Ovary (tissue), 10 donors: ENCODE measurements at regions of chr11 and their contacts with region 1.

Region 1: GRCh38 chr11:33829433-33830141 is 55.3 kb upstream of the FBXO3 start:
- DNase-seq: peak; percentile 35 to 66 (median 56)
- H3K4me3 ChIP-seq: peak overlapping the region; percentile 33
- H3K27ac ChIP-seq: no peak overlapping the region
- H3K4me1 ChIP-seq: peaks cover 2% of the 10 kb centered on the region
- H3K27me3 ChIP-seq: no peaks in the 10 kb centered on the region
- CTCF ChIP-seq: peak; percentile 24 to 53 (median 47)
- EP300 ChIP-seq: no peak
- POLR2A ChIP-seq: no peak

Region 2: DNA sequence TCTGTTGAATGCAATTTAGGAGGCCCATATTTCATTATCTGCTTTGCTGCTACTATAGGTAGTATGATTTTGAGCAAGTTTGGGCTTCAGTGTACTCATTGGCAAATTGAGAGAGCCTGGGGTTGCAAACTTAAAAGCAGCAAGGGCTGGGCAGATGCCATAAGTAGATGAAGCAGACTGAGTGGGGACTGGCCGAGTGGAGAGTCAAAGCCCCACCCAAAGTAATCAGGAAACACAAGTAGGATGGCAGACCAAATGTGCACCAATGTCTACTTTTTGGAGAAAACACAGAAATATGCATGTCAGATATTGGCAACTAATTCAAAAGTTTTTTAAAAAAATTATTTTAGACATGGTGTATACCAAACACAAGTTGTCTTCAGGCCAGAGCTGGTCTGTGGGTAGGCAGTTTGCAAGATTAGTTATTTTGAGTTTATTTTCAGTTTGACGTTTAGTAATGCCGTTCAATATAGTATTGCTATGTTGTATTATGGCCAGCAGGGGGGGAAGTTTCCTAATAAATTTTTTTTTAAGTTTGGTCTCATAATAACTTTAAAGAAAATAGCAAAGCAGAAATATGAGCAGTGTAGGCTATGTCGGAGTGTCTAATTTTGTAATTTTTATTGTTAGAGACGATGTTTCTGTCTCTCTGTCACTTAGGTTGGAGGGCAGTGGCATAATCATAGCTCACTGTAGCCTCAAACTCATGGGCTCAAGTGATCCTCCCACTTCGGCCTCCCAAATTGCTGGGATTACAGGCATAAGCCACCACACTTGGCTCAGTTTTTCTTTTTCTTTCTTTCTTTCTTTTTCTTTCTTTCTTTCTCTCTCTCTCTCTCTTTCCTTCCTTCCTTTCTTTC is 467.3 kb before region 1 on chr11:
- intact Hi-C with region 1: loop called in 1 of 4 experiments (anchors 10 kb)
- DNase-seq: no peak
- H3K4me3 ChIP-seq: no peak overlapping the region
- H3K27ac ChIP-seq: no peak overlapping the region
- H3K4me1 ChIP-seq: no peaks in the 10 kb centered on the region
- H3K27me3 ChIP-seq: no peaks in the 10 kb centered on the region
- CTCF ChIP-seq: peak; percentile 47 to 67 (median 48)
- EP300 ChIP-seq: no peak
- POLR2A ChIP-seq: no peak

Region 3: GRCh38 chr11:34366522-34366921 is 536.9 kb after region 1 on chr11:
- intact Hi-C with region 1: loop called in 1 of 4 experiments (anchors 10 kb)
- DNase-seq: no peak
- H3K4me3 ChIP-seq: no peak overlapping the region
- H3K27ac ChIP-seq: no peak overlapping the region
- H3K4me1 ChIP-seq: no peaks in the 10 kb centered on the region
- H3K27me3 ChIP-seq: no peaks in the 10 kb centered on the region
- CTCF ChIP-seq: no peak
- EP300 ChIP-seq: no peak
- POLR2A ChIP-seq: no peak

Region 4: DNA sequence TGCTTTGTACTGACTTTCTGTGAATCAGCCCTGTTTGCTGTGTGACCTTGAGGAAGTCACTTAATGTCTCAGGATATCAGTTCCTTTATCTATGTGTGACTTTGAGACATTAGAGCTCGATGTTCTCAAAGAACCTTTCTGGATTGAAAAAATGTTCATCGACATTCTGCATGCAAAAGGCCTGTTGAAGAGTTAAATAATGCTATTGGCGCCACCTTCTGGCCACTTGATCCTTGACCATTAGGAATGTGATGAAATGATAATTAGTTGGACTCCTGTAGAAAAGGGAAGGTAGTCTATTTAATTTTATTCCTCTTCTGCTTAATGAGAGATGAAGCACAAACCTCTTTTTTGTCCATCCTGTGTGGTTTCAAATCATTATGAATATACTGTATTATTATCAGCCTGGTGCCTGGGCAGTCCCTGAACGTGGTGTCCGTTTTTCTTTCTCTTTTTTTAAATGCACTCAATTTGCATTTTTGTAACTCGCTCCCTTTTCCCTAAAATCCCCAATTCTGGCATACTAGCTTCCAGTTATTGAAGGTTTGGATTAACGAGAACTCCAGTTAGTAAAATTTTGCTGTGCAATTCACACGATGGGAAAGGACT is 663.3 kb after region 1 on chr11:
- intact Hi-C with region 1: loop called in 1 of 4 experiments (anchors 10 kb)
- DNase-seq: peak; percentile 13 to 61 (median 46)
- H3K4me3 ChIP-seq: no peak overlapping the region
- H3K27ac ChIP-seq: no peak overlapping the region
- H3K4me1 ChIP-seq: no peaks in the 10 kb centered on the region
- H3K27me3 ChIP-seq: no peaks in the 10 kb centered on the region
- CTCF ChIP-seq: peak in 2 of 3 donors; percentile 21 to 52
- EP300 ChIP-seq: no peak
- POLR2A ChIP-seq: no peak